ENCODE measurements at regions of chr18 and their contacts with region 1.

Region 1: GRCh38 chr18:58781627-58782194 is 83.0 kb upstream of the ZNF532 start:
- DNase-seq: peak; percentile 62 to 85
- ATAC-seq: peak; percentile 80 to 92 (median 90)
- H3K4me3 ChIP-seq: no peak overlapping the region
- H3K27ac ChIP-seq: peak overlapping the region in 3 of 10 donors; percentile 36 to 67 (median 39)
- H3K4me1 ChIP-seq: peaks cover 5 to 29% (median 14%) of the 10 kb centered on the region in 9 donors
- H3K27me3 ChIP-seq: no peaks in the 10 kb centered on the region
- CTCF ChIP-seq: peak; percentile 83 to 97 (median 93)

Region 2: GRCh38 chr18:58288922-58289797 is 492.6 kb before region 1 on chr18:
- intact Hi-C with region 1: no loop called
- DNase-seq: no peak
- ATAC-seq: peak in 6 of 8 donors; percentile 39 to 58 (median 51)
- H3K4me3 ChIP-seq: no peak overlapping the region
- H3K27ac ChIP-seq: peak overlapping the region in 8 of 10 donors; percentile 26 to 76 (median 64)
- H3K4me1 ChIP-seq: peaks cover 0 to 75% (median 43%) of the 10 kb centered on the region in 9 donors
- H3K27me3 ChIP-seq: no peaks in the 10 kb centered on the region
- CTCF ChIP-seq: no peak

Region 3: GRCh38 chr18:58864146-58865032 is 82.7 kb after region 1 on chr18 and contains the start of gene ZNF532:
- intact Hi-C with region 1: loop called in 5 of 10 experiments (anchors 5 to 10 kb)
- DNase-seq: peak; percentile 35 to 42
- ATAC-seq: peak; percentile 28 to 77 (median 64)
- H3K4me3 ChIP-seq: peak within 1 kb of the TSS; percentile 34 to 68 (median 55)
- H3K27ac ChIP-seq: peak within 1 kb of the TSS; percentile 93 to 100 (median 98)
- H3K4me1 ChIP-seq: peaks cover 23 to 93% (median 73%) of the 10 kb centered on the region in 9 donors
- H3K27me3 ChIP-seq: no peaks in the 10 kb centered on the region
- CTCF ChIP-seq: no peak
- total RNA-seq, gene ZNF532: 53.4 to 71.4 (median 66.8) TPM

Region 4: GRCh38 chr18:58980991-58981390 is 199.3 kb after region 1 on chr18:
- intact Hi-C with region 1: loop called in 1 of 10 experiments (anchors 2 kb)
- DNase-seq: no peak
- ATAC-seq: no peak
- H3K4me3 ChIP-seq: no peak overlapping the region
- H3K27ac ChIP-seq: no peak overlapping the region
- H3K4me1 ChIP-seq: peaks cover 0 to 18% (median 0%) of the 10 kb centered on the region in 9 donors
- H3K27me3 ChIP-seq: no peaks in the 10 kb centered on the region
- CTCF ChIP-seq: no peak

Region 5: GRCh38 chr18:58998401-58999203 is 216.9 kb after region 1 on chr18:
- intact Hi-C with region 1: loop called in 4 of 10 experiments (anchors 5 to 10 kb)
- DNase-seq: peak; percentile 52 to 83
- ATAC-seq: peak; percentile 57 to 92 (median 80)
- H3K4me3 ChIP-seq: peak overlapping the region in 6 of 10 donors; percentile 3 to 34 (median 19)
- H3K27ac ChIP-seq: peak overlapping the region; percentile 70 to 94 (median 87)
- H3K4me1 ChIP-seq: peaks cover 6 to 68% (median 49%) of the 10 kb centered on the region in 9 donors
- H3K27me3 ChIP-seq: no peaks in the 10 kb centered on the region
- CTCF ChIP-seq: peak in 1 of 9 donors; percentile 4

Region 6: DNA sequence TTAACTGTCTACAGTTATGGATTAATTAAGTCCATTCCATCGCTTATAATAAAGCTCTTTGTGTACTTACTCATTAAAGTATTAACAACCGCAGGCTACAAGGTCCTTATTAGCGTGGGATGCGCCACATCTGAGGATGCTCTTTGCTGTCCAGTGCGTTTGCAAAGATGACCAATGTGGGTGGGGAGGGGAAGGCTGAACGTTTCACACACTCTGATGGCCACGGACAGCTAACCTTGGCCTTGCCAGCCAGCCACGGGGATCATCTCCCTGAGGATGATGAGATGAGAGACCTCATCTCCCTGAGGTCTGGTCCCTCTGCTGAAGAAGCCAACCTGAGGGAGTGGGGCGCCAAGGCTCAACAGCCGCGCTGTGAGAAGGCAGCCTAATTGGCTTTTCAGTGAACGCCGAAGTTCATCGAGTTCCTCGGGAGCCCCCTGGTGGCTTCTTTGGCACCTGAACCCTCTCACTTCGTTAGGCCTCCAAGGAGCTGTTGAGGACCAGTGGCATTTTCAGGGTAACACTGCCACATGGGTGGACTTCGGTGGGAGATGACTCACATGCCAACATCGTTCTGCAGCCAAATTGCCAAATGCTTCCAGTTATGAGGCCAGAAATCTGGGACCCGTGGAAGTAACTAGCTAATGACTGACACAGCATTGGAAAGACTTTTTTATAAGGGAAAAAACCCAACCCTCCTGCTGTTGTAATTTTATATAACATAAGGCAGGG is 288.6 kb after region 1 on chr18:
- intact Hi-C with region 1: loop called in 9 of 10 experiments (anchors 1 to 5 kb)
- DNase-seq: peak; percentile 84
- ATAC-seq: peak; percentile 76 to 91 (median 85)
- H3K4me3 ChIP-seq: no peak overlapping the region
- H3K27ac ChIP-seq: peak overlapping the region in 1 of 10 donors; percentile 16
- H3K4me1 ChIP-seq: peaks cover 0 to 7% (median 0%) of the 10 kb centered on the region in 9 donors
- H3K27me3 ChIP-seq: no peaks in the 10 kb centered on the region
- CTCF ChIP-seq: peak; percentile 73 to 95 (median 89)

Measured in heart right ventricle (tissue), 16 donors.